Endothelial cell of umbilical vein (primary cell): ENCODE measurements at regions of chr12 and their contacts with region 1.

Region 1: GRCh38 chr12:106078358-106079010 is 60.3 kb downstream of the NUAK1 start:
- DNase-seq: peak; percentile 77
- H3K4me3 ChIP-seq: no peak overlapping the region
- H3K27ac ChIP-seq: peak overlapping the region; percentile 62
- H3K4me1 ChIP-seq: peaks cover 32% of the 10 kb centered on the region
- H3K27me3 ChIP-seq: no peaks in the 10 kb centered on the region
- CTCF ChIP-seq: no peak
- POLR2A ChIP-seq: no peak

Region 2: GRCh38 chr12:105705765-105706164 is 372.7 kb before region 1 on chr12:
- CTCF ChIA-PET with region 1: interaction called, 4 read pairs
- POLR2A ChIA-PET with region 1: no interaction called
- dilution Hi-C with region 1: no loop called
- intact Hi-C with region 1: loop called (anchors 5 kb)
- DNase-seq: peak; percentile 77
- H3K4me3 ChIP-seq: no peak overlapping the region
- H3K27ac ChIP-seq: no peak overlapping the region
- H3K4me1 ChIP-seq: peaks cover 9% of the 10 kb centered on the region
- H3K27me3 ChIP-seq: peaks cover 4 to 7% of the 10 kb centered on the region in 2 experiments
- CTCF ChIP-seq: peak; percentile 63 to 65
- POLR2A ChIP-seq: no peak